Naive thymus-derived CD4-positive, alpha-beta T cell (primary cell): ENCODE measurements at regions of chr14 and their contacts with region 1.

Region 1: DNA sequence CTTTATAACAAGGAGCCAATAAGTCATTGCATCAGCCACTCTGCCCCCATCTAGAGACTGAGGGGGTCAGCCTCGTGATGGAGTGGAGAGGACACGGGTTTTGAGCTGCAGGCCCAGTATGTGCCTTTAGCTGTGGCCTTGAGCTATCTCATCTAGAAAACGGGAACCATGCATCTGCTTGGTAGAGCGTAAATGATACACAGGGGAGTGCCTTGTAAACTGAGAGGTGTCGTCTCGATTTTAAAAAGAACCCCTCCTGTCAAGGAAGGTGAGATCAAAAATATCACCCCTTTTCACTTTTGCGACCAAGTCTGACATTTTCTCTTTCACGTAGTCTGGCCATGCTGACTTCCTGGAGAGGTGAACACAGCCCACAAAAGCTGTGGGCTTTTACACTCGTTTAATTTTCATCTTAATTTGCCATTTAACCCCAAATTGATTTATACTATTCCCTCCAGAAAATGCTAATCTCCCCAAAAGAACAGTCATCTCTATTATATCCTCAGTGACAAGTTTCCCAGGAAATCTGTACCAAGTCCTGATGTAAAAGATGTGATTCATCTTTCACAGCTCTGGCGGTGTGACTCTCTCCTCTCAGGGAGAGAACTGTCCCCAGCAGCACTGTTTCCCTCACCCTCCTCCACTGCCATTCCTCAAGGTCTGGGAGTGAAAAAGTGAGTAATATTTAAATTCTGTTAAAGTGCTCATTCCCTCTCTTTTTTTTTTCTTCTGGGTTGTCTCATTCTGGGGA is 30.6 kb downstream of the VCPKMT start:
- DNase-seq: peak in 1 of 9 donors; percentile 45
- ATAC-seq: no peak
- H3K4me3 ChIP-seq: no peak overlapping the region
- H3K4me3 Mint-ChIP-seq: peak overlapping the region; percentile 56 to 80 (median 70)
- H3K27ac ChIP-seq: peak overlapping the region; percentile 97
- H3K27ac Mint-ChIP-seq: peak overlapping the region; percentile 86 to 97 (median 90)
- H3K4me1 ChIP-seq: peaks cover 86 to 94% of the 10 kb centered on the region in 2 donors
- H3K4me1 Mint-ChIP-seq: peaks cover 65 to 97% (median 91%) of the 10 kb centered on the region in 7 donors
- H3K27me3 ChIP-seq: no peaks in the 10 kb centered on the region
- H3K27me3 Mint-ChIP-seq: no peaks in the 10 kb centered on the region

Region 2: GRCh38 chr14:49977126-49977841 is 108.5 kb before region 1 on chr14:
- CTCF ChIA-PET with region 1: interaction called, 7 read pairs
- POLR2A ChIA-PET with region 1: interaction called, 24 read pairs
- intact Hi-C with region 1: loop called in 1 of 2 experiments (anchors 1 kb)
- DNase-seq: peak in 8 of 9 donors; percentile 33 to 77 (median 64)
- ATAC-seq: peak; percentile 87
- H3K4me3 ChIP-seq: peak overlapping the region; percentile 58
- H3K4me3 Mint-ChIP-seq: peak overlapping the region; percentile 64 to 85 (median 80)
- H3K27ac ChIP-seq: peak overlapping the region; percentile 71
- H3K27ac Mint-ChIP-seq: peak overlapping the region; percentile 88 to 99 (median 97)
- H3K4me1 ChIP-seq: peaks cover 44 to 76% of the 10 kb centered on the region in 2 donors
- H3K4me1 Mint-ChIP-seq: peaks cover 58 to 99% (median 85%) of the 10 kb centered on the region in 7 donors
- H3K27me3 ChIP-seq: no peaks in the 10 kb centered on the region
- H3K27me3 Mint-ChIP-seq: no peaks in the 10 kb centered on the region

Region 3: DNA sequence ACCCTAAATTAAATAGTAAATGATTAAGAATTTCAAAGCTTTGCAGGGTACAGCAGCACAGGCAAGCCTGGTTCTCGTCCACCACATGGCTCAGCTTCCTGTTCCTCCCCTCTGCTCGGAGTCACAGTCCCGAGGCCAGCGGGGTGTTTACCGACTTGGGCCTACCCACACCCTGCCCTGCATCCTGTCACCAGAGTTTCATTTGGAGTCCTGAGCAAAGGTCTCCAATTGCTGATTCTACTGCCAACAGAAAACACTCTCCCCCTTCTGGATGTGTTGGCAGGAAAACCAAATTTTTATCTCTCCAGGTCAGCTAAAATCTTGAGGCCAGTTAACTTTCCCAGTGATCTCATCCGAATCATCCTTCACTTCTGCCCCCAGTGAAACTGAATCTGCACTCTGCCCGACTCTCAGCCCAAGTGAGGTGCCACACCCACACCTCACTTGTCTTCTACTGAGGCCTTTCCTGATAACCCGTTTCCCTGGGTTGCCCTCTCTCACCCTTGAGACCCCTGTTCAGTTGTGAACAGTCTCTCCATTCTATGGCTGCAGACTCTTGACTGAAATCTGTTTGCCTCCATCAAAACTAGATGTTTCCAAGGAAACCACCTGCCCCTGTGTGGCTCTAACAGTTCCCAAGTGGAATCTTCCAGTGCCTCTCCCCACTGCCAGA is 40.6 kb before region 1 on chr14:
- CTCF ChIA-PET with region 1: interaction called, 9 read pairs
- POLR2A ChIA-PET with region 1: interaction called, 15 read pairs
- intact Hi-C with region 1: loop called (anchors 1 kb)
- DNase-seq: peak in 8 of 9 donors; percentile 39 to 74 (median 62)
- ATAC-seq: peak; percentile 86
- H3K4me3 ChIP-seq: no peak overlapping the region
- H3K4me3 Mint-ChIP-seq: peak overlapping the region; percentile 50 to 89 (median 74)
- H3K27ac ChIP-seq: peak overlapping the region; percentile 69
- H3K27ac Mint-ChIP-seq: peak overlapping the region; percentile 88 to 99 (median 96)
- H3K4me1 ChIP-seq: peaks cover 51 to 63% of the 10 kb centered on the region in 2 donors
- H3K4me1 Mint-ChIP-seq: peaks cover 49 to 83% (median 71%) of the 10 kb centered on the region in 7 donors
- H3K27me3 ChIP-seq: no peaks in the 10 kb centered on the region
- H3K27me3 Mint-ChIP-seq: no peaks in the 10 kb centered on the region

Region 4: DNA sequence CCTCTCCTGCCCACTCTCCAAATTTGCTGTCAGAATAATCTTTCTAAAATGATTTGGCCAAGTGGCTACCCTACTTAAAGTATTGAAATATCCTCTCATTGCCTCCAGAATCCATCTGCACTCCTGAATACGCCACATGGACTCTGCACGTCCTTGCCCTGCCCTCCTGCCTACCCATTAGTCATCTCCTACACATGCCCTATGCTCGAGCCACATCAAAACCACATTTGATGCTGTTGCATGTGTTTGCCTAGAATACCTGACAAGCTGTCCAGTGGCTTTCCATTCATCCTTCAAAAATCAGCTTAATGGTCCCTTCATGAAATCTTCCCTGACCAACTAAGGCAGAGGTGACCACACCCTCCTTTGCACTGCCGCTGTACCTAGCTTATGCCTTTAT is 13.6 kb after region 1 on chr14:
- CTCF ChIA-PET with region 1: interaction called, 16 read pairs
- POLR2A ChIA-PET with region 1: interaction called, 128 read pairs
- intact Hi-C with region 1: loop called (anchors 1 kb)
- DNase-seq: no peak
- ATAC-seq: no peak
- H3K4me3 ChIP-seq: no peak overlapping the region
- H3K4me3 Mint-ChIP-seq: peak overlapping the region in 9 of 10 donors; percentile 9 to 61 (median 38)
- H3K27ac ChIP-seq: no peak overlapping the region
- H3K27ac Mint-ChIP-seq: peak overlapping the region; percentile 13 to 87 (median 79)
- H3K4me1 ChIP-seq: peaks cover 23 to 67% of the 10 kb centered on the region in 2 donors
- H3K4me1 Mint-ChIP-seq: peaks cover 39 to 92% (median 76%) of the 10 kb centered on the region in 7 donors
- H3K27me3 ChIP-seq: no peaks in the 10 kb centered on the region
- H3K27me3 Mint-ChIP-seq: peaks cover 0 to 5% (median 0%) of the 10 kb centered on the region in 5 donors